ENCODE measurements at regions of chr10 and their contacts with region 1.

Region 1: GRCh38 chr10:132054564-132054963 is 11.2 kb upstream of the JAKMIP3 start:
- DNase-seq: no peak
- ATAC-seq: no peak
- H3K4me3 ChIP-seq: no peak overlapping the region
- H3K27ac ChIP-seq: no peak overlapping the region
- H3K4me1 ChIP-seq: no peaks in the 10 kb centered on the region
- H3K27me3 ChIP-seq: no peaks in the 10 kb centered on the region

Region 2: DNA sequence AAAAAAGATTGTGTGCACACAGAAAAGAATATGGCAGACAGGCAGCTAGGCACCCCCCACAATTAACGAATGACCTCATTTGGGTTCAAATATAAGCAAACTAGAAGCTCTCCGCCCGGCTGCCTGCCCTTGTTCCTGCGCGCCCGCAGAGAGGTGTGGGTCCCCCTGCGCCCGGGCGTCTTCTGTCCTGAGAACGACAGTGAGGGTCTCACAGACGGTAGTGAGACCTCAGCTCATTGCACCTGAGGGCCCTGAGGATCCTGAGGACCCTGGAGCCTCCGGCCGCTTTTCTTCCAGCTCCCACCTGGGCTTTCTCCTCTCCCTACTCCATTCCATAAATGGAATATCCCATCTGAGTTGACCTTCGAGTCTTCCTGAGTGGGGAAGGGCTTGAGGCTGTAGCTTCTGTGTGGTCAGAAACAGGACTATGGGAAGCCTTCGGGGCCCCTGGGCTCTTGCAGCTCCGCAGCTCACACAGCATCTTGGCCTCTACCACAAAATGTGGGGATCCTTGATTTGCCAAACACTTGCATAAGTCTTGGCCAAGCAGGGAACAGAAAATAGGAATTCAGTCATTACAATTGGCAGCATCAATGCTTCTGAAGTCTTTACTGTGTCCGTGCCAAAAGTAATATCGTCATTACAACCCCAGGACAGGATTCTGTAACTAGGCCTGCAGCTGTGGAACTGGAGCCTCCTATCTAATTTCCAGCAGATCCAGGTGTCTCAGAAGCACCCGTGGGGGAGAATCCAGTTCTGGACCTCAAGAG is 55.0 kb after region 1 on chr10:
- intact Hi-C with region 1: loop called in 1 of 4 experiments (anchors 10 kb)
- DNase-seq: peak; percentile 45 to 74 (median 66)
- ATAC-seq: peak; percentile 62 to 76
- H3K4me3 ChIP-seq: no peak overlapping the region
- H3K27ac ChIP-seq: no peak overlapping the region
- H3K4me1 ChIP-seq: no peaks in the 10 kb centered on the region
- H3K27me3 ChIP-seq: no peaks in the 10 kb centered on the region